Uterus (tissue), 4 donors: ENCODE measurements at regions of chr11 and their contacts with region 1.

Region 1: DNA sequence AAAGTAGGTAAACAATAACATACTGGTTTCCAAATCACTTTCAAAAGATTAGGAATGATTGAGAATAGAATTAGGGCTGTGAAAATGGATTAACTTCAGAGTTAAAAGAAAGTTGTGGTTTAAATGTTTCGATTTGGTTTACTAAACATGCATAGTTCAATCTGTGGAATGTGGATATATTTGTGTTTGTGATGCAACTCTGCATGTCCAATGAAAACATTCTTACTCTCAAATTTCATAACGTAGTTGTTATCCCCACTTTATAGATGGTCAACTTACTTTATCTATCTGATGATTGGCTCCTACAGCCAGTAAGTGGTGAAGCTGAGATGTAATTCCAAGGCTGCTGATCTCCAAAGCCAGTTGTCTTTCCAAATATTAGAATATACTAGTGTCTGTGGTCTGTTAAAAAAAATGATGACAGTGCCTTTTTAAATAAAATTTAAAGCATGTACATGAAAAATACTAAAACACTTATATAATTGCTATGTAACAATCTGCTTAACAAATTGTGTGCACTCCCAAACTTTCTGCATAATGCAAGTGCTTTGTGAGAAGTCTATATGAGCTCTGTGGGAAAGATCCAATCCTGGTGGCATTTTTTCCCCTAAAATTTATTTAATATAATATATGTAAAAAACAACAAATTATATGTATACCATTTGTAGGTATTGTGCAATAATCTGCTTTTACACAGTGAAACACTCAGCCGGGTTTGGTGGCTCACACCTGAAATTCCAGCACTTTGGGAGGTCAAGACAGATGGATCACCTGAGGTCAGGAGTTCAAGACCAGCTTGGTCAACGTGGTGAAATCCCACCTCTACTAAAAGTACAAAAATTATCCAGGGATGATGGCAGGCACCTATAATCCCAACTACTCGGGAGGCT is 9.7 kb upstream of the SIK3 start:
- DNase-seq: no peak
- H3K4me3 ChIP-seq: no peak overlapping the region
- H3K27ac ChIP-seq: no peak overlapping the region
- H3K4me1 ChIP-seq: no peaks in the 10 kb centered on the region
- H3K27me3 ChIP-seq: no peaks in the 10 kb centered on the region
- CTCF ChIP-seq: no peak
- POLR2A ChIP-seq: no peak

Region 2: GRCh38 chr11:116787786-116788486 is 320.0 kb before region 1 on chr11 and contains the start of gene ZPR1:
- intact Hi-C with region 1: loop called (anchors 10 kb)
- DNase-seq: peak; percentile 77 to 83
- H3K4me3 ChIP-seq: peak within 1 kb of the TSS; percentile 76 to 99
- H3K27ac ChIP-seq: peak within 1 kb of the TSS; percentile 68 to 79
- H3K4me1 ChIP-seq: peaks cover 7 to 10% of the 10 kb centered on the region in 2 donors
- H3K27me3 ChIP-seq: no peaks in the 10 kb centered on the region
- CTCF ChIP-seq: peak in 1 of 4 experiments; percentile 16
- POLR2A ChIP-seq: peak; percentile 33 to 58
- total RNA-seq, gene ZPR1: 4.1 to 43.1 (median 22.3) TPM

Region 3: GRCh38 chr11:116879800-116880625 is 227.9 kb before region 1 on chr11:
- intact Hi-C with region 1: loop called (anchors 10 kb)
- DNase-seq: peak in 1 of 2 donors; percentile 33
- H3K4me3 ChIP-seq: no peak overlapping the region
- H3K27ac ChIP-seq: no peak overlapping the region
- H3K4me1 ChIP-seq: no peaks in the 10 kb centered on the region
- H3K27me3 ChIP-seq: no peaks in the 10 kb centered on the region
- CTCF ChIP-seq: peak; percentile 61 to 81 (median 74)
- POLR2A ChIP-seq: no peak

Region 4: DNA sequence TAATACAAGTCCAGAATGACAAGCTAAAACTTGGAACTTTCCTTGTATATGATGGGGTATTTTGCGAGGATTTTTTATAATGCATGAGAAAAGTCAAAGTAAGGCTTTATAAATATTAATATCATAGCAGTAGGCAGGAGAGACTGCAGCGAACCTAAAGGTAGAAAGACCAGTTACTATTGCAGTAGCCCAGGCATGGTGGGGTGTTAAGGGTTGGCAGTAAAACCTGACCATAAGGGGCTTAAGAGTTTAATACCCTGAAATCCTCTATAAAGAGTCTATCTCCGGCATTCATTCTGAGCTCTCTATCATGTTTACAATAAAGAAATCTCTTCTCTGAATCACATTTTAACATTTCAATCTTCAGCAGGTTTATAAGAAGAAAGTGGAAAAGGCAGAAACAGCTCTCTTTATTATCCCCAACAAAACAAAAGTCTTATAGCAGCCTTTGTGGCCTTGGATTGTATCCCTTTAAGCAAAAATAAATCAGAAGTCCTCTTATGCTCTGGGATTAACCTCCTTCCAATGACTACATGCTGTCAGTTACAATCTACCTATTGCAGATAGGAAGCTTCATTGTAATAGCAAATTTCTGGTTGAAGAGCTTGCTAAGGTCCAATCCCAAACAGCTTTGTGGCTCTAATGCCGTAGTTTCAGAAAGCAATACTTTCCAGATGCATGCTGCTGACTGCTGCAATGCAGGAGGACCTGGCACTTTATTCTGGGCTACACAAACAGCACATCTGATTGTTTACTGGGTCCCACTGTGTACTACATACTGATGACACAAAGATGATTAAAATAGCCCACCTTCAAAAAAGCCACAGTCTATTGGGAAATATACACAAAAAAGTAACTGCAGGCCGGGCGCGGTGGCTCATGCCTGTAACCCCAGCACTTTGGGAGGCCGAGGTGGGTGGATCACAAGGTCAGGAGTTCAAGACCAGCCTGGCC is 55.5 kb before region 1 on chr11:
- intact Hi-C with region 1: no loop called
- DNase-seq: no peak
- H3K4me3 ChIP-seq: no peak overlapping the region
- H3K27ac ChIP-seq: no peak overlapping the region
- H3K4me1 ChIP-seq: no peaks in the 10 kb centered on the region
- H3K27me3 ChIP-seq: no peaks in the 10 kb centered on the region
- CTCF ChIP-seq: no peak
- POLR2A ChIP-seq: no peak

Region 5: GRCh38 chr11:117171404-117172061 is 63.6 kb after region 1 on chr11:
- intact Hi-C with region 1: no loop called
- DNase-seq: no peak
- H3K4me3 ChIP-seq: no peak overlapping the region
- H3K27ac ChIP-seq: peak overlapping the region; percentile 11 to 12
- H3K4me1 ChIP-seq: peaks cover 0 to 5% of the 10 kb centered on the region in 2 donors
- H3K27me3 ChIP-seq: no peaks in the 10 kb centered on the region
- CTCF ChIP-seq: no peak
- POLR2A ChIP-seq: no peak